ENCODE measurements at regions of chr6 and their contacts with region 1.

Region 1: GRCh38 chr6:129598244-129599187 is 111.5 kb downstream of the ARHGAP18 start:
- DNase-seq: no peak
- H3K4me3 ChIP-seq: no peak overlapping the region
- H3K27ac ChIP-seq: no peak overlapping the region
- H3K4me1 ChIP-seq: no peaks in the 10 kb centered on the region
- H3K27me3 ChIP-seq: no peaks in the 10 kb centered on the region
- CTCF ChIP-seq: peak; percentile 81 to 85 (median 82)
- EP300 ChIP-seq: no peak
- POLR2A ChIP-seq: no peak

Region 2: GRCh38 chr6:129695373-129696027 is 97.0 kb after region 1 on chr6:
- intact Hi-C with region 1: no loop called
- DNase-seq: no peak
- H3K4me3 ChIP-seq: no peak overlapping the region
- H3K27ac ChIP-seq: no peak overlapping the region
- H3K4me1 ChIP-seq: peaks cover 0 to 13% (median 7%) of the 10 kb centered on the region in 4 donors
- H3K27me3 ChIP-seq: no peaks in the 10 kb centered on the region
- CTCF ChIP-seq: no peak
- EP300 ChIP-seq: no peak
- POLR2A ChIP-seq: no peak

Region 3: DNA sequence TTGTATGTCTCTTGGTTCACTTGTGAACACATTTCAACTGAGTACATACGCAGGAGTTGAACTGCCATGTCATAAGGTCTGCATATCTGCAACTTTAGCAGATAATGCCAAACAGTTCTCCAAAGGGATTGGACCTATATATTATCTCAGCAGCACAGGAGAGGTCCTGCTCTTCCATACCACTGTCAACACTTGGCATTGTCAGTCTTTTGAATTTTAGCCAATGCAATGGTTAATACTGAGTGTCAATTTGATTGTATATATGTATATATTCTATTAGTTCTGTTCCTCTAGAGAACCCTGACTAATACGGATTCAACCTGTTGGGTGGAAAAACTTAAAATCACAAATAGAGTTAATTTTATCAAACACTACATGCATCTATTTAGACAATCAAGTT is 137.6 kb after region 1 on chr6:
- intact Hi-C with region 1: loop called (anchors 5 kb)
- DNase-seq: no peak
- H3K4me3 ChIP-seq: no peak overlapping the region
- H3K27ac ChIP-seq: no peak overlapping the region
- H3K4me1 ChIP-seq: no peaks in the 10 kb centered on the region
- H3K27me3 ChIP-seq: no peaks in the 10 kb centered on the region
- CTCF ChIP-seq: no peak
- EP300 ChIP-seq: no peak
- POLR2A ChIP-seq: no peak

Region 4: GRCh38 chr6:129751384-129751783 is 152.9 kb after region 1 on chr6:
- intact Hi-C with region 1: loop called (anchors 1 kb)
- DNase-seq: no peak
- H3K4me3 ChIP-seq: no peak overlapping the region
- H3K27ac ChIP-seq: no peak overlapping the region
- H3K4me1 ChIP-seq: peaks cover 15 to 29% (median 22%) of the 10 kb centered on the region in 4 donors
- H3K27me3 ChIP-seq: no peaks in the 10 kb centered on the region
- CTCF ChIP-seq: no peak
- EP300 ChIP-seq: no peak
- POLR2A ChIP-seq: no peak

Region 5: GRCh38 chr6:130020907-130021629 is 422.6 kb after region 1 on chr6:
- intact Hi-C with region 1: loop called (anchors 2 kb)
- DNase-seq: peak; percentile 93
- H3K4me3 ChIP-seq: peak overlapping the region; percentile 68 to 93 (median 84)
- H3K27ac ChIP-seq: peak overlapping the region; percentile 77 to 83 (median 80)
- H3K4me1 ChIP-seq: peaks cover 0 to 10% (median 7%) of the 10 kb centered on the region in 4 donors
- H3K27me3 ChIP-seq: no peaks in the 10 kb centered on the region
- CTCF ChIP-seq: peak; percentile 74 to 83 (median 82)
- EP300 ChIP-seq: no peak
- POLR2A ChIP-seq: no peak